Activated B cell treated with CpG ODN at 0.5 μM for 24 hours (primary cell): ENCODE measurements at regions of chr3 and their contacts with region 1.

Region 1: GRCh38 chr3:105774444-105775180 is 94.2 kb downstream of the CBLB start:
- DNase-seq: no peak
- ATAC-seq: peak; percentile 31
- H3K4me3 Mint-ChIP-seq: no peak overlapping the region
- H3K27ac Mint-ChIP-seq: peak overlapping the region; percentile 67
- H3K4me1 Mint-ChIP-seq: peaks cover 51% of the 10 kb centered on the region
- H3K27me3 Mint-ChIP-seq: no peaks in the 10 kb centered on the region
- CTCF ChIP-seq: no peak

Region 2: DNA sequence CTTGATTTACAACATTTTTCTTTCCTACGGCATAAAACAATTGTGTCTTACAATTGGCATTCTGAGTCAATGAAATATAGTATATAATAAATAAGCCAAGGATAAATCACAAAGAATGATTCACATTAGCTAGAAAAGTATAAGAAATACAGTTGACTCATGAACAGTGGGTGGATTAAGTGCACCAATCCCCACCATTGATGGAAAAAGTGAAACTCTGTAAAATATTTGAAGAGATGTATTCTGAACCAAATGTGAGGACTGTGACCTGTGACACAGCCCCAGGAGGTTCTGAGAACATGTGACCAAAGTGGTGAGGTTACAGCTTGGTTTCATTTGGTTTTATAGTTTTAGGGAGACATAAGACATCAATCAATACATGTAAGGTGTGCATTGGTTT is 180.4 kb before region 1 on chr3:
- CTCF ChIA-PET with region 1: no interaction called
- POLR2A ChIA-PET with region 1: no interaction called
- intact Hi-C with region 1: no loop called
- DNase-seq: no peak
- ATAC-seq: no peak
- H3K4me3 Mint-ChIP-seq: no peak overlapping the region
- H3K27ac Mint-ChIP-seq: no peak overlapping the region
- H3K4me1 Mint-ChIP-seq: no peaks in the 10 kb centered on the region
- H3K27me3 Mint-ChIP-seq: no peaks in the 10 kb centered on the region
- CTCF ChIP-seq: no peak

Region 3: GRCh38 chr3:105785803-105786202 is 11.2 kb after region 1 on chr3:
- CTCF ChIA-PET with region 1: no interaction called
- POLR2A ChIA-PET with region 1: interaction called, 5 read pairs
- intact Hi-C with region 1: loop called (anchors 1 kb)
- DNase-seq: no peak
- ATAC-seq: no peak
- H3K4me3 Mint-ChIP-seq: no peak overlapping the region
- H3K27ac Mint-ChIP-seq: no peak overlapping the region
- H3K4me1 Mint-ChIP-seq: peaks cover 20% of the 10 kb centered on the region
- H3K27me3 Mint-ChIP-seq: no peaks in the 10 kb centered on the region
- CTCF ChIP-seq: no peak